ENCODE measurements at regions of chr10 and their contacts with region 1.

Region 1: GRCh38 chr10:103192451-103193106 is 493 bp downstream of the NT5C2 start:
- DNase-seq: peak; percentile 90
- ATAC-seq: peak; percentile 76 to 80

Region 2: GRCh38 chr10:102384053-102384452 is 808.5 kb before region 1 on chr10:
- intact Hi-C with region 1: no loop called
- DNase-seq: no peak
- ATAC-seq: no peak

Region 3: GRCh38 chr10:102710610-102711009 is 482.0 kb before region 1 on chr10:
- intact Hi-C with region 1: no loop called
- DNase-seq: no peak
- ATAC-seq: no peak

Region 4: GRCh38 chr10:103021897-103022286 is 170.7 kb before region 1 on chr10:
- intact Hi-C with region 1: no loop called
- DNase-seq: no peak
- ATAC-seq: no peak

Region 5: DNA sequence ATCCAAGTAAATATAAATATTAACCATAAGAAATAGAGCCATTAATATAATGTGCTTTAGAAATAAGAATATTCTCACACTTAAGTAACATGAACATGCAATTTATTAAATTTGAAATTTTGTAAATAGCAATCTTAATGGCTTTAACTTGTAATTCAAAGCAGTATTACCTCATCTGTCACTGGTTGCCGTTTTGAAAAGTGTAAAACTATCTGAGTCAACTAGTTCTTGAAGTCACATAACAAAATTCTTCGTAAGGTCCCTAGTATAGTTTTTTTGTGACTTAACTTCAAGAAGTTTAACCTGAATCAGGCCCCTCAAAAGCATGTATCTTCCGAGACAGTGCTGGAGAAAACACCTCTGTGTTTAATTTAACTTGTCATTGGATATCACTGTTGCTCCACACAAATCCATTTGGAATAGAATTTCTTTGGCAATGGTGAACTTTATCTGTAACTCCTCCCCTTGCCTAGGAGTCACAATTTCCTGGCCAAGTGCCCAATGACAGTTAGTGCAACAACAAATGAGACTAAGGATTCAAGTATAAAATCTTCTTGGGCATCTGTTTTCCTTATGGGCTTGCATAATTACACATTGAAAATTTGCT is 46.6 kb before region 1 on chr10:
- intact Hi-C with region 1: loop called in 1 of 2 experiments (anchors 5 kb)
- DNase-seq: peak; percentile 87
- ATAC-seq: peak; percentile 83